GM23248 (cell line): ENCODE measurements at regions of chr2 and their contacts with region 1.

Region 1: GRCh38 chr2:20378792-20379519 is 28.3 kb upstream of the PUM2 start:
- DNase-seq: peak; percentile 94
- H3K4me3 ChIP-seq: no peak overlapping the region
- H3K27ac ChIP-seq: no peak overlapping the region
- H3K4me1 ChIP-seq: peaks cover 6% of the 10 kb centered on the region; the same call in 1 of the 2 replicates
- H3K27me3 ChIP-seq: no peaks in the 10 kb centered on the region

Region 2: GRCh38 chr2:20925265-20925889 is 546.4 kb after region 1 on chr2:
- in situ Hi-C with region 1: loop called (anchors 25 kb)
- DNase-seq: peak; percentile 15
- H3K4me3 ChIP-seq: no peak overlapping the region
- H3K27ac ChIP-seq: no peak overlapping the region
- H3K4me1 ChIP-seq: no peaks in the 10 kb centered on the region
- H3K27me3 ChIP-seq: no peaks in the 10 kb centered on the region